ENCODE measurements at regions of chr3 and their contacts with region 1.

Region 1: DNA sequence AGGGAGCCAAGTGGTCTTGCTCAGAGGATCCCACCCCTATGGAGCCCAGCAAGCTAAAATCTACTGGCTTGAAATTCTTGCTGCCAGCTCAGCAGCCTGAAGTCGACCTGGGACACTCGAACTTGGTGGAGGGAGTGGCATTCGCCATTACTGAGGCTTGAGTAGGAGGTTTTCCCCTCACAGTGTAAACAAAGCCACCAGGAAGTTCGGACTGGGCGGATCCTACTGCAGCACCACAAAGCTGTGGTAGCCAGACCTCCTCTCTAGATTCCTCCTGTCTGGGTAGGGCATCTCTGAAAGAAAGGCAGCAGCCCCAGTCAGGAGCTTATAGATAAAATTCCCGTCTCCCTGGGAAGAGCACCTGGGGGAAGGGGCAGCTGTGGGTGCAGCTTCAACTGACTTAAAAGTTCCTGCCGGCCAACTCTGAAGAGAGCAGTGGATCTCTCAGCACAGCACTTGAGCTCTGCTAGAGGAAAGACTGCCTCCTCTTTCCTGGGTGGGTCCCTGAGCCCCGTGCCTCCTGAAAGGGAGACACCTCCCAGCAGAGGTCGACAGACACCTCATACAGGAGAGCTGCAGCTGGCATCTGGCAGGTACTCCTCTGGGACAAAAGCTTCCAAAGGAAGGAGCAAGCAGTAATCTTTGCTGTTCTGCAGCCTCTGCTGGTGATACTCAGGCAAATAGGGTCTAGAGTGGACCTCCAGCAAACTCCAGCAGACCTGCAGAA is 576.3 kb upstream of the NECTIN3 start:
- DNase-seq: no peak
- ATAC-seq: no peak
- H3K4me3 ChIP-seq: no peak overlapping the region
- H3K4me3 Mint-ChIP-seq: no peak overlapping the region
- H3K27ac ChIP-seq: no peak overlapping the region
- H3K27ac Mint-ChIP-seq: no peak overlapping the region
- H3K4me1 ChIP-seq: no peaks in the 10 kb centered on the region
- H3K4me1 Mint-ChIP-seq: no peaks in the 10 kb centered on the region
- H3K27me3 ChIP-seq: no peaks in the 10 kb centered on the region
- H3K27me3 Mint-ChIP-seq: no peaks in the 10 kb centered on the region
- CTCF ChIP-seq: no peak

Region 2: GRCh38 chr3:110506890-110507289 is 11.5 kb after region 1 on chr3:
- CTCF ChIA-PET with region 1: no interaction called
- POLR2A ChIA-PET with region 1: no interaction called
- intact Hi-C with region 1: loop called in 1 of 2 experiments (anchors 1 kb)
- DNase-seq: no peak
- ATAC-seq: no peak
- H3K4me3 ChIP-seq: no peak overlapping the region
- H3K4me3 Mint-ChIP-seq: no peak overlapping the region
- H3K27ac ChIP-seq: no peak overlapping the region
- H3K27ac Mint-ChIP-seq: no peak overlapping the region
- H3K4me1 ChIP-seq: no peaks in the 10 kb centered on the region
- H3K4me1 Mint-ChIP-seq: no peaks in the 10 kb centered on the region
- H3K27me3 ChIP-seq: no peaks in the 10 kb centered on the region
- H3K27me3 Mint-ChIP-seq: no peaks in the 10 kb centered on the region
- CTCF ChIP-seq: no peak

Measured in CD8-positive, alpha-beta T cell (primary cell).